Activated CD4-positive, alpha-beta T cell treated with anti-CD3 and anti-CD28 coated beads, Interleukin-2, amount 10 ng/mL, durations not matched to agents 24 days and 14 days (primary cell): ENCODE measurements at regions of chr12 and their contacts with region 1.

Region 1: DNA sequence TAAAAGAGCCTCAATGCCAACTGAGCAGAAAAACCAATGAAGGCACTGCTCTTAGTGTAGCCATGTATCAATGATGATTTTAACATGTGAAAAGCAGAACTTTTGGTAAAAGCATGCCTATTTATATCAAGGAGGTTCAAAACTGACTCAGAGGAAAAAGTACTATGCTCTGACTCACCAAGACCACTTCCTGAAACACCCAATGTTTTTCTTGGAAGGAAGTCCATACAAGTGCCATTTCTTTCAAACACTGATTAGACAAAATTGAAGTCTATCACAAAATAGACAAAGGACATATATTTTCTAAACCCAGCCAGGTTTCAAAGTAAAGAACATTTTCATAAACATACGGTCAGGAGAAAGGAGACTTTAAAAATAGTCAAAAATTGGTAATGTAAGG is 88.6 kb downstream of the EPS8 start:
- DNase-seq: peak; percentile 74
- H3K4me3 Mint-ChIP-seq: peak overlapping the region; percentile 77
- H3K27ac Mint-ChIP-seq: peak overlapping the region; percentile 95
- H3K4me1 Mint-ChIP-seq: peaks cover 33% of the 10 kb centered on the region
- H3K27me3 Mint-ChIP-seq: no peaks in the 10 kb centered on the region

Region 2: DNA sequence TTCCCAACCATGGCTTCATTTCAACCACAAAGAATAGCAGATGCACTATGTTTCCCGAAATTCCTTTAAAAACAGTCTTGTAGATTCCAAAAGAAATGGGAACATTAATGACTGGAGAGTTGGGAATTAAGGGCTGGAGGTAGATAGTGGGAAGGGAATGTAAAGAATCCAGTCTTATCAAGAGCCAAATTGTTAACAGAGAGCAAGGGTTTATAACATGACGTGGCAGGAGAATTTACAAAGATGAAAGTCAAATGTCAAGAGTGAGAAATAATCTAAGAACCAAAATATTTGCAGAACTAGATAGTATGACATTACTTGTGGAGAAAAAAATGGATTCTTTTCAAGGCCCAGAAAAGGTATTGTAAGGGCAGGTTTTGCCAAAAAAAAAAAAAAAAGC is 1920.1 kb before region 1 on chr12:
- intact Hi-C with region 1: no loop called
- DNase-seq: no peak
- H3K4me3 Mint-ChIP-seq: no peak overlapping the region
- H3K27ac Mint-ChIP-seq: no peak overlapping the region
- H3K4me1 Mint-ChIP-seq: no peaks in the 10 kb centered on the region
- H3K27me3 Mint-ChIP-seq: no peaks in the 10 kb centered on the region

Region 3: DNA sequence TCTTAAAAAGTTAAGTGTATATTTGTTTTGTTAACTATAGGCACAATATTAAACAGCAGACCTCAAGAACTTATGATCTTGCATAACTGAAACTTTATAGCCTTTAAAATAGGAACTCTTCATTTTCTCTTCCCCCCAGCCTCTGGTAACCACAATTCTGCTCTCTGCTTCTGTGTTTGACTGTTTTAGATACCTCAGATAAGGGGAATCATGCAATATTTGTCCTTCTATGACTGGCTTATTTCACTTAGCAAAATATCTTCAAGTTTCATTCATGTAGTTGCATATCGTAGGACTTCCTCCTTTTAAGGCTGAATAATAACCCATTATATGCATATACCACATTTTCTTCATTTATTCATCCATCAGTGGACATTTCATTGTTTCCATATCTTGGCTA is 247.0 kb before region 1 on chr12:
- intact Hi-C with region 1: no loop called
- DNase-seq: no peak
- H3K4me3 Mint-ChIP-seq: no peak overlapping the region
- H3K27ac Mint-ChIP-seq: no peak overlapping the region
- H3K4me1 Mint-ChIP-seq: no peaks in the 10 kb centered on the region
- H3K27me3 Mint-ChIP-seq: peaks cover 7% of the 10 kb centered on the region

Region 4: DNA sequence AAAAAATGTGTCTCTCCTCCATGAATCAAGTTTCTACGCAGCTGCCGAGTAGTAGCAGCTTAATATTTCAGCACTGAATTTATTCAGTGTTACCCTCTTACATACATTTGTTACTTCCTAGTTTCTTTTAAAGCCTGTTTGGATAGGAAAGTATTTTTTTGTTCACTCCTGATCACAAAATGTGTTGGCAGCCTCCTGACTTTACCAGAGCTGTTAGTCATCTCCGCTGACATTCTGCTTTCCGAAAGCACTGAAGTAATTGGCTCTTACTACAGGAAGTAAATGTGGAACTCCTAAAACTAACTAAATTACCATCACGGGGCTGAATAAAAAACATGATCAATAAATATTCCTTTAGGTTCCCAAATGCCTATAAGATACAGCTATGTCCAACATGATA is 136.9 kb before region 1 on chr12:
- intact Hi-C with region 1: loop called (anchors 5 kb)
- DNase-seq: peak; percentile 80
- H3K4me3 Mint-ChIP-seq: peak overlapping the region; percentile 82
- H3K27ac Mint-ChIP-seq: peak overlapping the region; percentile 94
- H3K4me1 Mint-ChIP-seq: peaks cover 65% of the 10 kb centered on the region
- H3K27me3 Mint-ChIP-seq: no peaks in the 10 kb centered on the region

Region 5: DNA sequence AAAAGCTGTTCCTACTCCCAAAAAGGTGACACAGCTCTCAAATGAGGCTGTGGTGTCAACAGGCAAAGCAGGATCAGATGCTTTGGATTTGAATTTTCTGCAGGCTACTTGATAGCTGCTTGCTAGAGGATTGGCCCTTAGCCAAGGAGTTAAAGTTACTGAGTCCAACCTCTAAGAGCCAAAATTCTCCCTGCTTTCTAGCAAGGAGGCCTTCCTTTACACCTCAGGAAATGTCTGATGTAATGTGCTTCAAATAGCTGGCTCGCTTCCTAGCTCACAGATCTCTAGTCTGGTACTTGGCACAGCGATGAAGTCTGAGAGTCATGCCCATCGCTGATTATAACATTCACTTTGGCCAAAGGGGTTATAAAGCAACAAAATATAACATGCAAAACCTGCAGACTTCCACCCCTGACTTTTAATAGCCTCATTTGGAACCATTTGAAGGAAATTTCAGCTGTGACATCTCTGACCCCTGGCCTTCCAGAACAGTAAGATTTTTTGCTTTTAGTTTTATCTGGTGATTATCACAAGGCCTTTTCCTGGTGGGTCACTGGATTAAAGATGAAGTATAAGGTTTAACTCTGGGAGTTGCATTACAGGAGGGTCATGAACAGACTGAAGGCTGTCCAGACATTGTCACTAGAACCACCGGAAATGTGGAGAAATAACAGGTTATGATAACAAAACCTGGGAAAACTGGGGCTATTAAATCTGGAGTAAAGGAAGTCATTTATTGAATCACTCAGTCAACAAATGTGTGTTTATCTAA is 101.1 kb before region 1 on chr12:
- intact Hi-C with region 1: loop called (anchors 2 kb)
- DNase-seq: no peak
- H3K4me3 Mint-ChIP-seq: no peak overlapping the region
- H3K27ac Mint-ChIP-seq: no peak overlapping the region
- H3K4me1 Mint-ChIP-seq: peaks cover 2% of the 10 kb centered on the region
- H3K27me3 Mint-ChIP-seq: no peaks in the 10 kb centered on the region

Region 6: DNA sequence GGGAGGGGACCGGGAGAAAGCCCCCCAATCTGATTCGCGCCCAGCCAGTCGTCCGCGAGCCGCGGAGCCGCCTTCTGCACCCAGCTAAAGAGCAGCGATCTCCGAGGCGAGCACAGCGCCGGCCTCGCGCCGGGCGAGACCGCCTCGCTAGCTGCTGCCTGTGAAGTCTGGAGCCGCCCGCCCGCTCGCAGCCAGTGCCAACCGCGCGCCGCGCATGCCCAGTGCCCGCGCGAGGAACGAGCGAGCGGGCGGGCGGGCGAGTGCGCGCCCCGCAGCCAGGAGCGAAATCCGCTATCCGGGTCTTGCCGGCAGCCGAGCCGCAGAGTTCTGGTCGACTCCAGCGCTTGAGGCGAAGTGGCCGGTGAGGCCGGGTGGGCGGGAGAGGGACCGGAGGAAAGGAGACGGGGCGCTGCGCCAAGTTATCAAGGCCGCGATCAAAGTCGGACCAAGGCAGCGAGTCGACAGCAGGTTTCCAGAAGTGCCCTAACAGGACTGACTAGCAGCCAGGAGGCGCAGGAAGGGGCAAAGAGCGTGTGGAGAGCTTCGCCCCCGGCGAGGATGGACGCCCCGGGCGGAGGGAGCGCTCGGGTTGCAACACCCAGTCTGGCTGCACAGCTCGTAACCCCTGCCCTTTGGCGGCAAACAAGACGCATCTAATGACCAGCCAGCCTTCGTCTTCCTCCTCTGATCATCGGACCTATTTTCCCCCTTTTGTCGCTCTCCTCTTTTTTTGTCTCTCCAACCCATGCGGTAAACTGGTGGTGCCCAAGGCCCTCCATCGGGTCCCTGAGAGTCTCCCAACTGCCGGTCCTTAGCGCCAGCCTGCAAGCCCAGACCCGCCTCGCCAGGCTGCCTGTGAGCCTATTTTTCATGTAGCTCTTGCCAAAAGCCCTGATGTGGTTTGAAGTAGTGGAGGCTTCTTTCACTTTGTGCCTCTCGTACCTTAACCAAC is 88.9 kb after region 1 on chr12 and contains the start of gene EPS8:
- intact Hi-C with region 1: loop called (anchors 1 kb)
- DNase-seq: peak; percentile 96
- H3K4me3 Mint-ChIP-seq: peak within 1 kb of the TSS; percentile 87
- H3K27ac Mint-ChIP-seq: peak within 1 kb of the TSS; percentile 74
- H3K4me1 Mint-ChIP-seq: peaks cover 12% of the 10 kb centered on the region
- H3K27me3 Mint-ChIP-seq: peaks cover 69% of the 10 kb centered on the region
- total RNA-seq, gene EPS8: 2.2 and 2.4 TPM in 2 replicates

Region 7: DNA sequence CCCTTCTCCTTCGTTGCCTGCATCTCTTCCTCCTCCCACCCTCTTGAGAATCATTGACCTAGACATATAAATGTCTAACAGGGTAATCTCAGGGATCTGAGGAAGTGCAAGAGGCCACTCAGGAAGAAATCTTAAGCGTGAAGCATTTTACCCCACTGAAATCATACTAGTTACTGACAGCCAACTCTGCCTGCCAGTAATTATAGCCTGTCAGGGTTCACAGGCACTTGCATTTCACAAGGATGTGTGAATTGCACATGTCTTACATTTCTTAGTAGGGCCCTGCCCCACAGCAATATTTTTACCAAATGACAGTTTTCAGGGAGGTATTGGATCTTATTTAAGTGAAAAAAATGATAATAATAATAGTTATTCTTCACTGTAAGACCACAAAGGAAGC is 449.7 kb after region 1 on chr12:
- intact Hi-C with region 1: no loop called
- DNase-seq: no peak
- H3K4me3 Mint-ChIP-seq: no peak overlapping the region
- H3K27ac Mint-ChIP-seq: no peak overlapping the region
- H3K4me1 Mint-ChIP-seq: no peaks in the 10 kb centered on the region
- H3K27me3 Mint-ChIP-seq: no peaks in the 10 kb centered on the region